ENCODE measurements at regions of chr19 and their contacts with region 1.

Region 1: GRCh38 chr19:51926784-51927742 is at the start of gene ZNF613:
- DNase-seq: peak; percentile 77
- H3K4me3 Mint-ChIP-seq: peak within 1 kb of the TSS; percentile 97
- H3K27ac Mint-ChIP-seq: peak within 1 kb of the TSS; percentile 93
- H3K4me1 Mint-ChIP-seq: peaks cover 15% of the 10 kb centered on the region
- H3K27me3 Mint-ChIP-seq: no peaks in the 10 kb centered on the region
- total RNA-seq, gene ZNF613: 3.6 and 3.8 TPM in 2 replicates

Region 2: DNA sequence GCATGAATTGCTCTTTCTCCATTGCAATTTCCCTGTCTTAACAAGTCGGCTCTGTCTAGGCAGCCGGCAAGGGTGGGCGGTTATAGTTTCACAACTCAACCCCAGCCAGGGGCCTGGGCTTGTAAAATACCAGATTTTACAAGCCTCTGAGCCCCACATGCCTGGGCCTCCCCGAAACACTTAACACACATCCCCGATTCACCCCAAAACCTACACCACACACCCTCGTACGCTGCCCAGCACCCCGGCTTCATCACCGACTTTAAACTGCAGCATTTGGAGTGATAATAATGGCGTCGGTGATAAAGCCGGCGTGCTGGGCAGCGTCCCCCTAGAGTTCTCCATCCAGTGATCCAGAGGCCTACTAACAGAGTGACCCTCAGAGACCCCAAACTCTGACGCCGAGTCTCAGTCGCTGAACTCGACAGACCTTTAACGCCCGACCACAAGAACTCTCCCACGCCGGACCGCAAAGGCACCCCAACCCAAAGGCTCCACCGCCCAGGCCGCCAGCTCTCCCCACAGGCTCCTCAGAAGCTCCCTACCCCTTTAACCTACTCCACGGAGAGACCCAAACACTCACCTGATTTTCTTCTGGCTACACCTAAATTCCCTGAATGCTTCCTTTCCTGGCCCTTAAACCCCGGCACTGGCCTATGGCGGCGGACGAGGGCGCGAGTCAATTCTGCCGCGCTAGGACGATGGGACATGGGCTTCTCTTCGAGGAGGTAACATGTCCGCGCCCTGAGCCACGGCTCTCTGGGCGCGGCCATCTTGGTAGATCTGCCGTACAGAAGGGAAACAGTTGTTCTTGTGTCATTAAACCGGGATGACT is 22.5 kb before region 1 on chr19 and contains the start of gene ZNF649:
- intact Hi-C with region 1: loop called (anchors 1 kb)
- DNase-seq: peak; percentile 72
- H3K4me3 Mint-ChIP-seq: peak within 1 kb of the TSS; percentile 99
- H3K27ac Mint-ChIP-seq: peak within 1 kb of the TSS; percentile 98
- H3K4me1 Mint-ChIP-seq: peaks cover 13% of the 10 kb centered on the region
- H3K27me3 Mint-ChIP-seq: peaks cover 4% of the 10 kb centered on the region
- total RNA-seq, gene ZNF649: 11.8 and 12.1 TPM in 2 replicates

Region 3: DNA sequence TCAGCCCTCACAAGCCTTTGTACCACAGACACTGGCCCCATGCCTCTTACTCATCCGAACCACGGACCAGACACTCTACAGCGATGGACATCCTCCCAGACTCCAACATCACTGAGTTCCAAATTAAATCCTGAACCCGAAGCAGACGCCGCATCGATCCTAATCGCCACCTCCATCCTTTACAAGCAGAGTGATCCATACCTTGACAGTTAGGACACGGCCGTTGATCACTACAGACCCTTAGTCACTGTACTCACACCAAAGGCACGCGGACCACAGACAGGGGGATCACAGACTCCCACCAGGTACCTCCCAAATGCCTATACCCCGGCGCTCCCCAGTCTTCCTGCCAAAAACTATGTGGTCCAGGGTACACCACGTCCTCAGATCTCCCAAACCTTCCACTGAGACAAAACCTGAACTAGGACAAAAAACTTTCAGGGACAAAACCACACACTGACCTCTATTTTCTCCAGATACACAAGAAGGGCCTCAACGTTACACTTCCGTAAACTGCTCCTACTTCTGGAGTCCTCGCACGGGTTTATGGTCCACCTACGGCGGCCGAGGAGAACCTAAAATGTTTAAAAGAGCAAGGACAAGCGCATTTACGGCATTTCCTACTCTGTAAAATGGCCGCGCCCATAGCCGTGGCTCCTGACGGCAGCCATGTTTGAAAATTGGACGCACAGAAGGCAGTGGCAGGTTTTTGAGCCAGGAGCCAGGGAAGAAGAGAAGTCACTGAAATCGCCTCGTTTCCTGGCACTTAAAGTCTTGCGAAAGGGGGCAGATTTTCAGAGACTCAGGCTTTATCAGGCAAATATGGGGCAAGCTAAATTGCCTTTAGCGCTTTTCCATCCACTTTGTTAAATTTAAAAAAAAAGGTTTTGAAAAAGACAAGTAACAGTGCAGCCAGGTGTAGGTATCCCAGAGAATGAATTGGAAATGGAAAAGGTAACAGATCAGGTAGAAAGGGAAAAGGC is 59.5 kb after region 1 on chr19 and contains the start of gene ZNF350:
- intact Hi-C with region 1: loop called (anchors 1 kb)
- DNase-seq: peak; percentile 84
- H3K4me3 Mint-ChIP-seq: peak within 1 kb of the TSS; percentile 95
- H3K27ac Mint-ChIP-seq: peak within 1 kb of the TSS; percentile 89
- H3K4me1 Mint-ChIP-seq: peaks cover 8% of the 10 kb centered on the region
- H3K27me3 Mint-ChIP-seq: no peaks in the 10 kb centered on the region
- total RNA-seq, gene ZNF350: 9.1 and 9.2 TPM in 2 replicates

Region 4: GRCh38 chr19:52007806-52008557 is 80.9 kb after region 1 on chr19 and contains the start of gene ZNF615:
- intact Hi-C with region 1: loop called (anchors 1 kb)
- DNase-seq: peak; percentile 80
- H3K4me3 Mint-ChIP-seq: peak within 1 kb of the TSS; percentile 93
- H3K27ac Mint-ChIP-seq: peak within 1 kb of the TSS; percentile 96
- H3K4me1 Mint-ChIP-seq: peaks cover 10% of the 10 kb centered on the region
- H3K27me3 Mint-ChIP-seq: no peaks in the 10 kb centered on the region
- total RNA-seq, gene ZNF615: 6.3 and 6.7 TPM in 2 replicates

Region 5: DNA sequence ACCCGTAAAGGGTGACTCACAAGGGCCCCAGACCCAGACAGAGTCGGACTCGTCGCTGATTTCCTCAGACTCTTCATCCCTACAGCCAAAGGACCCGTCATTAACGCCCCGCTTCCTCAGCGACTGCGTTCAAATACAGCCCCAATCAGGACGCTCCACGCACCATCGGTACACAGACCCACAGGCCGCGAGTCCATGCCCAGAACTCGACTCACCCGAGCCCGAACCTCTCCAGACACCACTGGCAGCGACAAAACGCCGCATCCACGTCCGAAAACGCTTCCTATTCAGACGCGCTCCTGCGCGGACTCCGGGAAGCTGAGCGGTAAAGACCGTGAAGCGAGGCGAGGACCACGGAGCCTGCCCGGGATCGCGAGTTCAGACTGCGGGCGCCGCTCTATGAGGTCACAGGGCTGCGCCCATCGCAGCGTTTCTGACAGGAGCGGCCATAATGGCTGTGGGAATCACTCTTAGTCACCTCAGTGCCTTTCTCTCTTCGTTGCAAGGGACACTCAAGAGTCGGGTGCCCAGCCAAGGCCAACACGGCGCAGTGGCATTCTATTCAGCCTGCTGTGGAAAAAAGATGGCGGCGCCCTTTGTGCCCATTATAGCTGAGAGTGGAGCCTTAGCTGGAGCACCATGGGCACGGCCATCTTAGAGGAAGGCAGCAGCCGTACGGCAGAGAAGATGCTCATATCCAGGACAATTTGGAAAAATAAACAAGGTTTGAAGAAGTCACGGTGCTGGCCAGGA is 101.1 kb after region 1 on chr19 and contains the start of gene ZNF614:
- intact Hi-C with region 1: loop called (anchors 1 kb)
- DNase-seq: peak; percentile 82
- H3K4me3 Mint-ChIP-seq: peak within 1 kb of the TSS; percentile 92
- H3K27ac Mint-ChIP-seq: peak within 1 kb of the TSS; percentile 93
- H3K4me1 Mint-ChIP-seq: peaks cover 11% of the 10 kb centered on the region
- H3K27me3 Mint-ChIP-seq: no peaks in the 10 kb centered on the region
- total RNA-seq, gene ZNF614: 9.2 and 9.6 TPM in 2 replicates

Region 6: GRCh38 chr19:52048555-52049501 is 121.8 kb after region 1 on chr19 and contains the start of gene ZNF432:
- intact Hi-C with region 1: loop called (anchors 1 kb)
- DNase-seq: peak; percentile 78
- H3K4me3 Mint-ChIP-seq: peak within 1 kb of the TSS; percentile 96
- H3K27ac Mint-ChIP-seq: peak within 1 kb of the TSS; percentile 99
- H3K4me1 Mint-ChIP-seq: peaks cover 9% of the 10 kb centered on the region
- H3K27me3 Mint-ChIP-seq: no peaks in the 10 kb centered on the region
- total RNA-seq, gene ZNF432: 13.3 and 15.5 TPM in 2 replicates

Region 7: DNA sequence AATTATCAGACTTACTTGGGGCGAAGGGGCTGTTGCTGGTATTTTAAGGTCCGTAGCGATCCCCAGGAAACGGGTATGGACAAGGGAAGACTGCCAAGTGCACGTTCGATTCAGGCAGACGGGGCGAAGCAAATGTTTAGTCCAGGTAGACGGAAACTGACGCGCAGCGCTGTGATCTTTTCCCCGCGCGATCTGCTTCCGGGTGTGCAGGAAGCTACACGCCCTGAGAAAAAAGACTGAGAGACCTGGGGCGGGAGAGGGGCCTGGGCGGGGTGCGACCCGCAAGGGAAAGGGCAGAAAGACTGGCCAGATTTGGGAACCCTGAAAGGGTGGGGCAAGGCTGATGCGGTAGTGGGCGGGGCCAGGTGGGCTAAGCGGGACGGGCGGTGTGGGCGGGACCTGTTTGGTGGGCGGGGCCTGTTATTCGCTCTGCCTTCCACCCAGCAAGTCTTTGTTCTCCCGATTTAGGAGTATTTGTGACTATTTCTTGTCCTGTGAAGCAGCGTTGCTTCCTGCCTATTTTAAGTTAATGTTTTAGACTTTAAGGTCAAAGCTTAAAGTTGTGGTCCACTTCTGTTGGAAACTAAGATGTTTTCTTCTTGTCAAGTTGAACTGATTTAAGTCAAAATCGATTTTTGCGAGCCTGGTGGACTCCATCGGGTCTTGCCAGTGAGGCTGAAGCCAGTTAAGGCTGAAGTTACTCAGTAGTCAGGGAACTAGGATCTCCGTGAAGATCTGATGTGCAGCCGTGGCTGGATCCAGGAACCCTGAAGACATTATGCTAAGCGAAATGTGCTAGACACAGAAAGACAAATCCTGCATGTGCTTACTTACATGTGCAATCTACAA is 244.5 kb after region 1 on chr19 and contains the start of gene ZNF836:
- intact Hi-C with region 1: loop called (anchors 5 kb)
- DNase-seq: peak; percentile 84
- H3K4me3 Mint-ChIP-seq: peak within 1 kb of the TSS; percentile 96
- H3K27ac Mint-ChIP-seq: peak within 1 kb of the TSS; percentile 92
- H3K4me1 Mint-ChIP-seq: peaks cover 14% of the 10 kb centered on the region
- H3K27me3 Mint-ChIP-seq: no peaks in the 10 kb centered on the region
- total RNA-seq, gene ZNF836: 7.2 and 8.8 TPM in 2 replicates

Measured in activated T-helper 2 cell treated with anti-CD3 and anti-CD28 coated beads, Interferon-gamma antibody, Interleukin-2, Interleukin-4, amounts not matched to agents 10 μg/mL and 5 μg/mL and 100 μg/mL, durations not matched to agents 14 hours and 24 hours and 36 hours (primary cell).